CD4-positive, alpha-beta T cell (primary cell): ENCODE measurements at regions of chr3 and their contacts with region 1.

Region 1: DNA sequence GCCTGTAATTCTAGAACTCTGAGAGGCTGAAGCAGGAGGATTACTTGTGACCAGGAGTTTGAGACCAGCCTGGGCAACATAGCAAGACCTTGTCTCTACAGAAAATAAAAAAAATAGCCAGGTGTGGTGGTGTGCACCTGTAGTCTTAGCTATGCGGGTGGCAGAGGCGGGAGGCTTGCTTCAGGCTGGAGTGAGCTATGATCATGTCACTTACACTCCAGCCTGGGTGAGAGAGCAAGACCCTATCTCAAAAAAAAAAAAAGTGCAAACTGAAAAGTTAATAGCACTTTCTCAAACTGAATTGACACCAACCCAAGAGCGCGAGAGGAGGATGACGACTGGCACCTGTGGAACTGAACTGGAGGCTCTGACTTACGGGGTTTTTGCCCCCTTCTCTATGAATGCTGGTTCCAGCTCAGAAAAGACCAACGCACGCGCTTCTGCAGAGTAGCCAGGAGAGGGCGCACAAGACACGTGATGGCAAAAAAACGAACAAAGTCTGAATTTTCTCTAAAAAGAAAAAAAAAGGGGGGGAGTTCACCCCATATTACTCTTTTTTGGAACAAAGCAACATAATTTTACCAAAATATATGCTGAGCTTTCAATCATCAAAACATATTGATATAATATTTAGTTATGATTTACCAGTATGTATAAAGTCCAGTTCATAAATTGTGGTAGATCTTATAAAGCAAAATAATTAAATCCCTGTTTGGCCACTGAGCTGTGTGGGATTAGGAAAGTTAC is 23.7 kb downstream of the CFAP92 start:
- DNase-seq: peak; percentile 44 to 85 (median 57)
- ATAC-seq: peak; percentile 80
- H3K4me3 ChIP-seq: no peak overlapping the region
- H3K4me3 Mint-ChIP-seq: no peak overlapping the region
- H3K27ac ChIP-seq: no peak overlapping the region
- H3K27ac Mint-ChIP-seq: no peak overlapping the region
- H3K4me1 ChIP-seq: peaks cover 5% of the 10 kb centered on the region
- H3K4me1 Mint-ChIP-seq: peaks cover 11% of the 10 kb centered on the region
- H3K27me3 ChIP-seq: no peaks in the 10 kb centered on the region
- H3K27me3 Mint-ChIP-seq: no peaks in the 10 kb centered on the region
- CTCF ChIP-seq: peak; percentile 97

Region 2: GRCh38 chr3:128910006-128910405 is 60.2 kb before region 1 on chr3:
- CTCF ChIA-PET with region 1: no interaction called
- POLR2A ChIA-PET with region 1: no interaction called
- intact Hi-C with region 1: no loop called
- DNase-seq: no peak
- ATAC-seq: no peak
- H3K4me3 ChIP-seq: no peak overlapping the region
- H3K4me3 Mint-ChIP-seq: no peak overlapping the region
- H3K27ac ChIP-seq: no peak overlapping the region
- H3K27ac Mint-ChIP-seq: no peak overlapping the region
- H3K4me1 ChIP-seq: no peaks in the 10 kb centered on the region
- H3K4me1 Mint-ChIP-seq: no peaks in the 10 kb centered on the region
- H3K27me3 ChIP-seq: no peaks in the 10 kb centered on the region
- H3K27me3 Mint-ChIP-seq: no peaks in the 10 kb centered on the region
- CTCF ChIP-seq: no peak

Region 3: DNA sequence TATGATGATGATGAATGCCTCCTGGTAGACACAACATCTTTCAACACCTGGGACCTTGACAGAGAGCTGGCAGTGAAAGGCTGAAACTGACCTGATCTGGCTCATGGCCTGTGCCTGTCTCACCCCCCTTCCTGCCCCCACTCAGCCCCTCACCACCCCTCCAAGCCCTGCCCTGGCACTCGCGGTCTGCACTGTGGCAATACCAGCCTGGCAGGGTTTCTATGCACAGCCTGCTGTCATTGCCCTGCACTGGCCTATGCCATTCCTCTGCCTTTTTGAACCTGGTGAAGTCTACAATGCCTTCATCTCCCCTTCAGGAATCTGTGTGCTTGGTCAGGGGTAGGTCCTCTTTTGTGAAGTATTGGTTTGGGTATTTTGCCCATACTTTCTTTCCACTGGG is 34.2 kb before region 1 on chr3:
- CTCF ChIA-PET with region 1: no interaction called
- POLR2A ChIA-PET with region 1: no interaction called
- intact Hi-C with region 1: no loop called
- DNase-seq: no peak
- ATAC-seq: no peak
- H3K4me3 ChIP-seq: no peak overlapping the region
- H3K4me3 Mint-ChIP-seq: no peak overlapping the region
- H3K27ac ChIP-seq: no peak overlapping the region
- H3K27ac Mint-ChIP-seq: no peak overlapping the region
- H3K4me1 ChIP-seq: no peaks in the 10 kb centered on the region
- H3K4me1 Mint-ChIP-seq: no peaks in the 10 kb centered on the region
- H3K27me3 ChIP-seq: peaks cover 0 to 6% of the 10 kb centered on the region in 2 experiments
- H3K27me3 Mint-ChIP-seq: no peaks in the 10 kb centered on the region
- CTCF ChIP-seq: no peak

Region 4: DNA sequence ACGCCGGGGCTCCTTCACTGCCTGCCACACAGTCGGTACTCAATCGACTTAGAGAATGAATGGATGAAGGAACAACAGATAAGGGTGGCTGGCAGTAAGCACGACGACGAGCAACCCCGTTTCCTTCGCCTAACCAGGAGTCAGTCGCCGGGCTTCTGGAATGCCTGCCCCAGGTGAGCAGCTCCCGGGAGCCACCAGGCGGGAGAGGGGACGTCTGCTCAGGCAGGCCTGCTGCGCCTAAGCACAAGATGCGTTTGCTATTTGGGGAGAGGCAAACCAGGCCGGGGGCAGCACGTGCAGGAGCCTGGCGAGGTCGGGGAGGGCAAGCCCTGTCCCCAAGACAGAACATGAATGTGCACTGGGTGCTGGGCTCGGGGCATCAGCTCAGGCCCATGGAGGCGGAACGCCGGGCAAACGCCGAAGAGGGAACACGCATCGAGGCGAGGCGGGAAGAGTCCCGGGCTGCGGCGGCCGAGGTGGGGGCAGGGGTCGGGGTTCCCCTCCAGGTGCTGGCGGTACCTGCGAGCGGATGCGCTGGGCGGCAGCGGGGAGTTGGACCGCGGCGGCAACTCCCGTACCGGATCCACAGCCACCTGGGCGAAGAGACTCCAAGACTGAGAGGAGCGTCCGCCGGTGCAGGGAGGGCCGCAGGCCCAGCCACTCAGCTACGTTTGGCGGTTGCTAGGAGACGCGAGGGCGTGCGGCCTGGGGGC is 23.5 kb after region 1 on chr3 and contains the start of gene CFAP92:
- CTCF ChIA-PET with region 1: interaction called, 20 read pairs
- POLR2A ChIA-PET with region 1: interaction called, 8 read pairs
- intact Hi-C with region 1: no loop called
- DNase-seq: peak; percentile 85 to 96 (median 90)
- ATAC-seq: peak; percentile 97
- H3K4me3 ChIP-seq: peak within 1 kb of the TSS; percentile 48
- H3K4me3 Mint-ChIP-seq: peak within 1 kb of the TSS; percentile 80
- H3K27ac ChIP-seq: peak within 1 kb of the TSS; percentile 30 to 38
- H3K27ac Mint-ChIP-seq: peak within 1 kb of the TSS; percentile 78
- H3K4me1 ChIP-seq: peaks cover 30% of the 10 kb centered on the region
- H3K4me1 Mint-ChIP-seq: peaks cover 47% of the 10 kb centered on the region
- H3K27me3 ChIP-seq: no peaks in the 10 kb centered on the region
- H3K27me3 Mint-ChIP-seq: no peaks in the 10 kb centered on the region
- CTCF ChIP-seq: no peak
- total RNA-seq, gene CFAP92: 0.19 to 0.45 TPM

Region 5: GRCh38 chr3:129026728-129027543 is 56.8 kb after region 1 on chr3:
- CTCF ChIA-PET with region 1: interaction called, 10 read pairs
- POLR2A ChIA-PET with region 1: interaction called, 3 read pairs
- intact Hi-C with region 1: no loop called
- DNase-seq: peak; percentile 85 to 97 (median 90)
- ATAC-seq: peak; percentile 99
- H3K4me3 ChIP-seq: peak overlapping the region; percentile 54
- H3K4me3 Mint-ChIP-seq: peak overlapping the region; percentile 78
- H3K27ac ChIP-seq: peak overlapping the region; percentile 71 to 83
- H3K27ac Mint-ChIP-seq: peak overlapping the region; percentile 95
- H3K4me1 ChIP-seq: peaks cover 22% of the 10 kb centered on the region
- H3K4me1 Mint-ChIP-seq: peaks cover 18% of the 10 kb centered on the region
- H3K27me3 ChIP-seq: no peaks in the 10 kb centered on the region
- H3K27me3 Mint-ChIP-seq: no peaks in the 10 kb centered on the region
- CTCF ChIP-seq: peak; percentile 82

Region 6: GRCh38 chr3:129052675-129053074 is 82.5 kb after region 1 on chr3:
- CTCF ChIA-PET with region 1: interaction called, 12 read pairs
- POLR2A ChIA-PET with region 1: interaction called, 9 read pairs
- intact Hi-C with region 1: loop called in 1 of 2 experiments (anchors 2 kb)
- DNase-seq: no peak
- ATAC-seq: no peak
- H3K4me3 ChIP-seq: no peak overlapping the region
- H3K4me3 Mint-ChIP-seq: no peak overlapping the region
- H3K27ac ChIP-seq: no peak overlapping the region
- H3K27ac Mint-ChIP-seq: no peak overlapping the region
- H3K4me1 ChIP-seq: peaks cover 5% of the 10 kb centered on the region
- H3K4me1 Mint-ChIP-seq: peaks cover 9% of the 10 kb centered on the region
- H3K27me3 ChIP-seq: no peaks in the 10 kb centered on the region
- H3K27me3 Mint-ChIP-seq: no peaks in the 10 kb centered on the region
- CTCF ChIP-seq: no peak

Region 7: GRCh38 chr3:129085165-129085715 is 115.1 kb after region 1 on chr3:
- CTCF ChIA-PET with region 1: no interaction called
- POLR2A ChIA-PET with region 1: interaction called, 3 read pairs
- intact Hi-C with region 1: loop called in 1 of 2 experiments (anchors 5 kb)
- DNase-seq: no peak
- ATAC-seq: no peak
- H3K4me3 ChIP-seq: no peak overlapping the region
- H3K4me3 Mint-ChIP-seq: no peak overlapping the region
- H3K27ac ChIP-seq: no peak overlapping the region
- H3K27ac Mint-ChIP-seq: peak overlapping the region; percentile 69
- H3K4me1 ChIP-seq: peaks cover 4% of the 10 kb centered on the region
- H3K4me1 Mint-ChIP-seq: peaks cover 23% of the 10 kb centered on the region
- H3K27me3 ChIP-seq: no peaks in the 10 kb centered on the region
- H3K27me3 Mint-ChIP-seq: no peaks in the 10 kb centered on the region
- CTCF ChIP-seq: no peak

Region 8: DNA sequence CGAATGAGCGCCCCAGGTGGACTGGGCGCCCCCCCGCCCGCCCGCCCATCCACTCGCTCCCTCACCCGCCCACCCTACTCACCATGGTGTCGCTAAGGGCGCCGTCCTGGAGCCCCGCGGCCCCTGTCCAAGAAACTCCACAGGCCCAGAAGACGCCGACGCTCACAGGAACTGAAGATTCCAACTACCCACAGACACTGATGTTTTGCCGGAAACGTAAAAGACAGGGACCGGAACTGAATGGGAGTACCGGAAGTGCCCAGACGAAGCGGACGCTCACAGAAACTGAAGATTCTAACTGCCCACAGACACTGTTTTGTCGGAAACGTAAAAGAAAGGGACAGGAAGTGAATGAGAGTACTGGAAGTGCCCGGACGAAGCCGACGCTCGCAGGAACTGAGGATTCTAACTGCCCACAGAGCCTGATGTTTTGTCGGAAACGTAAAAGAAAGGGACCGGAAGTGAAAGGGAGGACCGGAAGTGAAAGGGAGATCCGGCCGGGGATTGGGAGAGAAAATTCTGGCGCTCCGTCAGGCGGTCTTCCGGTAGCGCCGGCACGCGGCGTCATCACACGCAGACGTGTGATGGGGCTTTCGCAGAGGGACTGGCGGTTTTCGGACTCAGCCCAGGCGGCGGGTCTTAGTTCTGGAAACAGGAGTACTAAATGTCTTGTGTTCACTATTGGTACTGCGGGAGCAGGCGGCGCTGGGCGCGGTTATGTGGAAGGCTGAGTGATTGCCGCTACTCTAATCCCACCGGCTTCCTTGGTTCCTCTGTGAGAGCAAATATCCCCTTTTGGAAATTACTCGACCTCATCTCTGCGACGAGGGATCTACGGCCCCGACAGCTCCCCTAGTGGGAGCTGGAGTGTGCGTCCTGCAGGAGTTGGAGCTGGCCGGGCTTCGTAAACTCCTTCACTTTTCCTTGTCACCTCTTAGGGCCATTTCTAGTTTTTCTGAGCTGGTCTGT is 191.0 kb after region 1 on chr3 and contains the start of gene ISY1:
- CTCF ChIA-PET with region 1: interaction called, 11 read pairs
- POLR2A ChIA-PET with region 1: interaction called, 7 read pairs
- intact Hi-C with region 1: no loop called
- DNase-seq: peak; percentile 70 to 97 (median 84)
- ATAC-seq: peak; percentile 74
- H3K4me3 ChIP-seq: peak within 1 kb of the TSS; percentile 82
- H3K4me3 Mint-ChIP-seq: peak within 1 kb of the TSS; percentile 96
- H3K27ac ChIP-seq: peak within 1 kb of the TSS; percentile 92 to 99
- H3K27ac Mint-ChIP-seq: peak within 1 kb of the TSS; percentile 95
- H3K4me1 ChIP-seq: peaks cover 24% of the 10 kb centered on the region
- H3K4me1 Mint-ChIP-seq: peaks cover 55% of the 10 kb centered on the region
- H3K27me3 ChIP-seq: no peaks in the 10 kb centered on the region
- H3K27me3 Mint-ChIP-seq: no peaks in the 10 kb centered on the region
- CTCF ChIP-seq: peak; percentile 76
- total RNA-seq, gene ISY1: 28.2 to 28.5 TPM

Region 9: DNA sequence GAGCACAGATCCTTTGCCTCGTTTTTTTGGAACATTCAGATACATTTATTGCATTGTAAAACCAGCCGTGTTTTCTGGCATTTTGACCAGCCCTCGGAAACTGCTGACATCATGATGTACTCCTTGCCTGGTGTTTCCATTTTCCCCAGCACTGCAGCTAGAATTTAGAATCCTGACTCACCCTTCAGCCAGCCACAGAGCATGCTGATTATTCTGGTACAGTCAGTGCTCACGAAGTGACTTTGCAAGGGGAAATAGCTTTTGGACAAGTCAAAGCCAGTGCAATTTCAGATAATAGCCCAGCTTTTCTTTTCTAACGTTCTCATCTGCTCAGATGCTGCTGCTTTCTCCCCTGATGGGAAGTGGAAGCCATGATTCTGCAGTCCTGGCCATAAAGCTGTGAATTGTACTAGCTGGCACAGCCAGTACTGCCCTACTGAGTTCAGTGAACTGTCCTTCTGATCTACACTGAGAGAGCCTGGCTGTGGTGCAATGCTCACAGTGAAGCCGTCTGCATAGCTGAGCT is 225.6 kb after region 1 on chr3:
- CTCF ChIA-PET with region 1: no interaction called
- POLR2A ChIA-PET with region 1: no interaction called
- intact Hi-C with region 1: no loop called
- DNase-seq: peak in 2 of 14 experiments; percentile 38 to 42
- ATAC-seq: no peak
- H3K4me3 ChIP-seq: no peak overlapping the region
- H3K4me3 Mint-ChIP-seq: no peak overlapping the region
- H3K27ac ChIP-seq: no peak overlapping the region
- H3K27ac Mint-ChIP-seq: no peak overlapping the region
- H3K4me1 ChIP-seq: no peaks in the 10 kb centered on the region
- H3K4me1 Mint-ChIP-seq: no peaks in the 10 kb centered on the region
- H3K27me3 ChIP-seq: no peaks in the 10 kb centered on the region
- H3K27me3 Mint-ChIP-seq: no peaks in the 10 kb centered on the region
- CTCF ChIP-seq: no peak

Region 10: GRCh38 chr3:129249276-129250065 is 279.3 kb after region 1 on chr3 and contains the start of gene COPG1:
- CTCF ChIA-PET with region 1: interaction called, 59 read pairs
- POLR2A ChIA-PET with region 1: interaction called, 8 read pairs
- intact Hi-C with region 1: loop called (anchors 1 kb)
- DNase-seq: peak; percentile 72 to 94 (median 86)
- ATAC-seq: peak; percentile 85
- H3K4me3 ChIP-seq: peak within 1 kb of the TSS; percentile 100
- H3K4me3 Mint-ChIP-seq: peak within 1 kb of the TSS; percentile 98
- H3K27ac ChIP-seq: peak within 1 kb of the TSS; percentile 79 to 88
- H3K27ac Mint-ChIP-seq: peak within 1 kb of the TSS; percentile 97
- H3K4me1 ChIP-seq: peaks cover 47% of the 10 kb centered on the region
- H3K4me1 Mint-ChIP-seq: peaks cover 55% of the 10 kb centered on the region
- H3K27me3 ChIP-seq: no peaks in the 10 kb centered on the region
- H3K27me3 Mint-ChIP-seq: no peaks in the 10 kb centered on the region
- CTCF ChIP-seq: no peak
- total RNA-seq, gene COPG1: 77.7 to 79.3 TPM